Prostate gland (tissue), 2 donors: ENCODE measurements at regions of chr20 and their contacts with region 1.

Region 1: GRCh38 chr20:50790651-50791277 is 4.1 kb upstream of the BCAS4 start:
- DNase-seq: peak; percentile 90
- H3K4me3 ChIP-seq: no peak overlapping the region
- H3K27ac ChIP-seq: peak overlapping the region; percentile 86
- H3K4me1 ChIP-seq: peaks cover 6% of the 10 kb centered on the region
- H3K27me3 ChIP-seq: no peaks in the 10 kb centered on the region
- CTCF ChIP-seq: peak; percentile 77 to 94 (median 84)
- POLR2A ChIP-seq: peak; percentile 50

Region 2: DNA sequence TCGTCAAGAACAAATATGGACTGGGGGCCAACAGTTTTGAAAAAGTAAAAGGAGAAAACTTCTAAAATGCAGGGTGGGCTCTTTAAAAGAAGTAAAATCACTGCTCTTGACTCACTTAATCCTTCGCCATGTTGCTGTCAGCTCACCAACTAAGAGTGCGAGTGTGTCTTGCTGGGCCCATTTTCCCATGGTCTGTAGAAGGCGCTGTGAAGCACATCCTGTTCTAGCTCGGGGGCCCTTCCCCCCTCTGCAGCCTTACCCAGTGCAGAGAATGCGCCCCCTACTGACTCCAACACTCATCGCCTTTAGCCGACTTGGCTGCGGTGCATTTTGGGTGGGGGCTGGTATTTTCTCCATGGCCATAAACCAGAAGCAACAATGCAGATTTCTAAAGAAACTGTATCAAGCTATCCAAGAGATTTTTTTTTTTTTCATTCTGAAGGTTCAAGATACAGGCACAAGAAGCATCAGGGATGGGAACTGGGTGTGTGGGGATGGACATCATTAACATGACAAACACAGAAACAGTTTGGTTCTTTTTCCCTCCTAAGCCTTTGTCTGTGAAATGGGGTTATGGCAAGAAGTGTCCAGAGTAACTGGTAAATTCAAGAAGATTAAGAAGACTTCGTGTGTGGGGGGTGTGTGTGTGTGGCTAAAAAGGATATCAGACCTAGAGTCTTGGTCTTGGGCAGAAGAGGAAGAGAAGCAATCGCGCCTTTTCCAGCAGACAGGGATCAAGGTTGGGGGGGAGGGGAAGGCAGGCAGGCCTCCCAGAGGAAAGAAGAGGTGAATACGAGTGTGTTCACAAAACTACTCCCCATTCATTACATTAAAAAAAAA is 138.8 kb after region 1 on chr20:
- intact Hi-C with region 1: loop called (anchors 2 kb)
- DNase-seq: peak; percentile 91
- H3K4me3 ChIP-seq: peak overlapping the region; percentile 78 to 89
- H3K27ac ChIP-seq: peak overlapping the region; percentile 69 to 98
- H3K4me1 ChIP-seq: peaks cover 5% of the 10 kb centered on the region
- H3K27me3 ChIP-seq: no peaks in the 10 kb centered on the region
- CTCF ChIP-seq: peak; percentile 70 to 93 (median 84)
- POLR2A ChIP-seq: no peak

Region 3: GRCh38 chr20:51306503-51307358 is 516.0 kb after region 1 on chr20:
- intact Hi-C with region 1: loop called (anchors 10 kb)
- DNase-seq: peak; percentile 72
- H3K4me3 ChIP-seq: no peak overlapping the region
- H3K27ac ChIP-seq: no peak overlapping the region
- H3K4me1 ChIP-seq: no peaks in the 10 kb centered on the region
- H3K27me3 ChIP-seq: no peaks in the 10 kb centered on the region
- CTCF ChIP-seq: peak; percentile 80 to 95 (median 88)
- POLR2A ChIP-seq: no peak